Calu3 (cell line): ENCODE measurements at regions of chr11 and their contacts with region 1.

Region 1: GRCh38 chr11:26649884-26650283 is 72.0 kb downstream of the SLC5A12 start:
- DNase-seq: peak; percentile 72
- H3K4me3 Mint-ChIP-seq: no peak overlapping the region
- H3K27ac Mint-ChIP-seq: no peak overlapping the region
- H3K4me1 Mint-ChIP-seq: no peaks in the 10 kb centered on the region
- H3K27me3 Mint-ChIP-seq: peaks cover 11% of the 10 kb centered on the region
- CTCF ChIP-seq: peak; percentile 65

Region 2: DNA sequence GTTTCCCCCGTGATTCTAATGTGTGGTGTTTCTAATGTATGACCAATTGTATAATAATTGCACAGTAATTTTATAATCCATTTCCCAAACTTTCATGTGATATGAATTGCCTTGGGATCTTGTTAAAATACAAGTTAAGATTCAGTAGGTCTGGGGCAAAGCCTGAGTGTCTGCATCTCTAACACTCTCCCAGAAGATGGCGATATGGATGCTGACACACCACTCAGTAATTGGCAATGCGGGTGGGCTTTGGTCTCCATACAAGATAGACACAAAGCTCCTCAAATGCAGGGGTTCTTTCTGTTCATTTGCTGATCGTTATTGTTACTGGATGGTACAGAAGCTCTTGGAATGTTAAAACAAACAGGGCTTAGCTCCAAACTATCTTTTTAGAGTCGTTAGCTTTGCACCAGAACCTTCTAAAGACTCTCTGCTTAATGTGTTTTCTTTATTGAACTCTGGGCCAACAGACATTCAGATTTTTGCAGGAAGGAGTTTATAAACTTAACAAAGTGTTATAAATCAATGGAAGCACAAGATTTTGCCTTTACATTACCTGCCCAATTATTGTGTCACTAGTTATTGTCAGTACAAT is 363.3 kb before region 1 on chr11:
- CTCF ChIA-PET with region 1: no interaction called
- intact Hi-C with region 1: loop called (anchors 1 kb)
- DNase-seq: peak; percentile 27
- H3K4me3 Mint-ChIP-seq: no peak overlapping the region
- H3K27ac Mint-ChIP-seq: no peak overlapping the region
- H3K4me1 Mint-ChIP-seq: peaks cover 10% of the 10 kb centered on the region
- H3K27me3 Mint-ChIP-seq: no peaks in the 10 kb centered on the region
- CTCF ChIP-seq: peak; percentile 45

Region 3: GRCh38 chr11:26297189-26297975 is 352.5 kb before region 1 on chr11:
- CTCF ChIA-PET with region 1: interaction called, 3 read pairs
- intact Hi-C with region 1: loop called (anchors 1 kb)
- DNase-seq: peak; percentile 34
- H3K4me3 Mint-ChIP-seq: no peak overlapping the region
- H3K27ac Mint-ChIP-seq: peak overlapping the region; percentile 42
- H3K4me1 Mint-ChIP-seq: no peaks in the 10 kb centered on the region
- H3K27me3 Mint-ChIP-seq: no peaks in the 10 kb centered on the region
- CTCF ChIP-seq: peak; percentile 65

Region 4: DNA sequence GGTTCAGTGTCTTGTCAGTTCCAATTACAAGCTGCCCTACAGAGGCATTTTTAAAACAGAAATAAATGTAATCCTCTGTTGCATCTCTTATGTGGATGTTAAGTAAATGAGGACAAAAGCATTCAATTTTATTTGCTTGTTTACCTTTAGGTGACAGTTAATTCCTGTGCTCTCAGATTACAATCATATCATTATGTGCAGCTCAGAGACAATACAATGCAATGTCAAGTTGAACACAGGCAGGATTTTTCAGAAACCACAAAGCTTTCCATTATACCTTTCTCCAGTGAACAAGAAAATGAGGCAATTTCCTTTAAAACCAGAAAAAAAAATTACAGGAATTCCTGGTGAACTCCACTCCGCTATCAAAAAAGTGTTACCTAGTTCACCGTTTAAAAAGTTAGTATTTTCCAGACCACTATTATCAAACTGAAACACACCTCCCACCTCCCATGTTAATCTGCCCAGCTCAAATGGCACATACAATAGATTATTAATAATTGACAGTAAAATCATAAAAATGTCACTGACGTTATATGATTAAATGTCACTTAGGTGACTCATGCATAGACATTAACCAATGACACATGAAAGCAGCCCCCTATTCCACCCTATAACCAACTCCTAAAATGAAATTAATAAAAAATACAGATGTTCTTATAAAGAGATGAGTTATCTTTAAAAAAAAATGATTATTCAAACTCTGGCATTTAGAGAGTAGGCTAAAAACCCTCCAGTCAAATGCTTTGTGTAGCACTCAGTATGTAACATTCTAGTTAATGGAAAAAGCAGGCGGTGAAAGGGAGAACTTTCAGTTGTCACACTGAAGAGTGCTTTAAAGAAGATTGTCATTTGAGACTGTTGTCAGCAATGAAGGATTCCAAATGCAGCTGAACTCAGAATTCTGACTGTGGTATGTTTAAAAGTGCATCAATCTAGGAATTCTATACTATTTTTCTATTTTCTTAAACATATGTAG is 176.4 kb before region 1 on chr11:
- CTCF ChIA-PET with region 1: no interaction called
- intact Hi-C with region 1: loop called (anchors 10 kb)
- DNase-seq: peak; percentile 0
- H3K4me3 Mint-ChIP-seq: peak overlapping the region; percentile 18
- H3K27ac Mint-ChIP-seq: peak overlapping the region; percentile 56
- H3K4me1 Mint-ChIP-seq: peaks cover 5% of the 10 kb centered on the region
- H3K27me3 Mint-ChIP-seq: no peaks in the 10 kb centered on the region
- CTCF ChIP-seq: no peak

Region 5: DNA sequence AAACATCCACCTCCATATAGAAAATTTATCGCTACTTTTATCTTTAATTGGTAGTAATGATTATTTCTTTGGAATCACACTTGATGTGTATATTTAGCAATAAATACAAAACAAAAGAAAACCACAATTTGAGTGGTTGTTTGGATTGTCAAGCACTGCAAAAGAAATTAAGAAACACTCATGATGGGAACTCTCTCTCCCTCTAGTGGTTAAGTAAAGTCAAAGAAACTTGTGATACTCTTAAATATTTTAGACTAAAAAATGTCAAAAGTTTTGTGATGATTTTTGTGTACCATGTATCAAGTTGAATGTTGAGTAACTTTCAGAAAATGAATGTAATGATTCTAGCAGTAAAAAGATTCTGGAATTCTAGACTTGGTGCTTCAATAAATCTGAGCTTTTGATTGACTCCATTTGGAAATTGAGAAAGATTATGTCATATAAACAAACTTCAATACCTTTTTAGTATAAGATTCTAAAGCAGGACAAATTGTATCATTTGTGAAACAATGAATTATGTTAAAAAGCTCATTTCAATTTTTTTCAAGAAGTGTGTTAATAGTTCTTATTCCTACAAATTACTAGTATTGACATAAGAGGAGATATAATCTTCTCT is 98.6 kb before region 1 on chr11:
- CTCF ChIA-PET with region 1: no interaction called
- intact Hi-C with region 1: loop called (anchors 2 kb)
- DNase-seq: no peak
- H3K4me3 Mint-ChIP-seq: no peak overlapping the region
- H3K27ac Mint-ChIP-seq: no peak overlapping the region
- H3K4me1 Mint-ChIP-seq: no peaks in the 10 kb centered on the region
- H3K27me3 Mint-ChIP-seq: no peaks in the 10 kb centered on the region
- CTCF ChIP-seq: peak; percentile 10

Region 6: DNA sequence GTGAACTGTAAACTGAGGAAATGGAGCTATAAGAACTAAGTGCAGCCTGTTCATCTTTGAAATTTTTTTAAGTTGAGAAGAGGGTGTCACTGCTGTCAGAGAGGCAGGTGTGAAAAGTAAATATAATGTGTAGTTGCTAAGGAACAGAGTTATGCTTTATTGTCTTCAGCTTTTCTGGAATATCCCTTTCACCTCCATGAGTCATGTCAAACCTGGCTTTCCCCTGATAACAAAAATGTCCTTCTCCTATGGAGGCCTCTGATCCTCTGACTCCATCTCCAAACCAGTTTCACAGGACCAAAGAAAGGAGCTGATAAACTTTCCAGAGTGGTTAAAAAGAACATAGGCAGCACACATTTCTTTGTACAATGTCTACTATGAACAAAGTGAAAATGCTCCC is 65.1 kb before region 1 on chr11:
- CTCF ChIA-PET with region 1: no interaction called
- intact Hi-C with region 1: loop called (anchors 2 kb)
- DNase-seq: peak; percentile 11
- H3K4me3 Mint-ChIP-seq: no peak overlapping the region
- H3K27ac Mint-ChIP-seq: peak overlapping the region; percentile 8
- H3K4me1 Mint-ChIP-seq: peaks cover 29% of the 10 kb centered on the region
- H3K27me3 Mint-ChIP-seq: no peaks in the 10 kb centered on the region
- CTCF ChIP-seq: no peak

Region 7: DNA sequence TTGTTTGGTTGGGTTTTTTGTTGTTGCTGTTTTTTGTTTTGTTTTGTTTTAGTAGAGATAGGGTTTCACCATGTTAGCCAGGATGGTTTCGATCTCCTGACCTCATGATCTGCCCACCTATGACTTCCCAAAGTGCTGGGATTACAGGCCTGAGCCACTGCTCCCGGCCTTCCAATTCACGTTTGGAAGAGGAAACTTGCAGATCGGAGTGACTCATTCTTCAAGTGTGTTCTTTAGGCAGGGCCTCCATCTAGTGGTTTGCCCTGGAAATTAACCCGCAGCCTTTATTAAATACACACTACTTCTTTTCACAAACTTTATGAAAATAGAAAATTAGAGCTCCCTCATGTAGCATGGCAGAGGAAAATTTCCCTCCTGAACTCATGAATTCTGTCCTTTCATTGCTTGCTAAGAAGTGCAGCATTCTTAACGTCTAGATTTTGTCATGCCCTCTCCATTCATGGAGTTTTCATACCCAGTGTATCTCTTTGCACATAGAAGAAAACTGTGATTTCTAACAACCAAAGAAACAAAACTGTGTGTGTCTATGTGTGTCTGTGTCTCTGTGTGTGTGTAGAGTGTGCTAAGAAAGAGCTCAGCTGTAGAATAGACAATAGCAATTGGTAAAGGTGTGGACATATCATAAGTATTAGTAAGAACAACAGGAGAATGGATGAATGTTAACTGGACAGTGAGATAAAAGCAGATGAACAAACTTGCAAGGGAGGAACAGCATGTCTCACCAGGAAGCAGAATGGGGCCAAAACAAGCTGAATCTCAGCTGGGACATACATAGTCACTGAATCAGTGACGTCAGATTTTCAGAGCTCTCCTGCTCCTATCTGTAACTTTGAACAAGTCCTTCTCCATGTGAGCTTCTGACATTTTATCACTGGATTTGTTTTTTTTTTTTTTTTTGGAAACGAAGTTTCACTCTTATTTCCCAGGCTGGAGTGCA is 509.1 kb after region 1 on chr11:
- CTCF ChIA-PET with region 1: no interaction called
- intact Hi-C with region 1: loop called (anchors 2 kb)
- DNase-seq: peak; percentile 53
- H3K4me3 Mint-ChIP-seq: no peak overlapping the region
- H3K27ac Mint-ChIP-seq: no peak overlapping the region
- H3K4me1 Mint-ChIP-seq: peaks cover 8% of the 10 kb centered on the region
- H3K27me3 Mint-ChIP-seq: peaks cover 23% of the 10 kb centered on the region
- CTCF ChIP-seq: peak; percentile 71